Activated T-helper 2 cell treated with anti-CD3 and anti-CD28 coated beads, Interferon-gamma antibody, Interleukin-2, Interleukin-4, amounts not matched to agents 10 μg/mL and 5 μg/mL and 100 μg/mL, durations not matched to agents 14 hours and 24 hours and 36 hours (primary cell): ENCODE measurements at regions of chr2 and their contacts with region 1.

Region 1: GRCh38 chr2:219433666-219434467 is 776 bp upstream of the SPEG start:
- DNase-seq: no peak
- H3K4me3 Mint-ChIP-seq: no peak overlapping the region
- H3K27ac Mint-ChIP-seq: no peak overlapping the region
- H3K4me1 Mint-ChIP-seq: no peaks in the 10 kb centered on the region
- H3K27me3 Mint-ChIP-seq: peaks cover 29% of the 10 kb centered on the region

Region 2: DNA sequence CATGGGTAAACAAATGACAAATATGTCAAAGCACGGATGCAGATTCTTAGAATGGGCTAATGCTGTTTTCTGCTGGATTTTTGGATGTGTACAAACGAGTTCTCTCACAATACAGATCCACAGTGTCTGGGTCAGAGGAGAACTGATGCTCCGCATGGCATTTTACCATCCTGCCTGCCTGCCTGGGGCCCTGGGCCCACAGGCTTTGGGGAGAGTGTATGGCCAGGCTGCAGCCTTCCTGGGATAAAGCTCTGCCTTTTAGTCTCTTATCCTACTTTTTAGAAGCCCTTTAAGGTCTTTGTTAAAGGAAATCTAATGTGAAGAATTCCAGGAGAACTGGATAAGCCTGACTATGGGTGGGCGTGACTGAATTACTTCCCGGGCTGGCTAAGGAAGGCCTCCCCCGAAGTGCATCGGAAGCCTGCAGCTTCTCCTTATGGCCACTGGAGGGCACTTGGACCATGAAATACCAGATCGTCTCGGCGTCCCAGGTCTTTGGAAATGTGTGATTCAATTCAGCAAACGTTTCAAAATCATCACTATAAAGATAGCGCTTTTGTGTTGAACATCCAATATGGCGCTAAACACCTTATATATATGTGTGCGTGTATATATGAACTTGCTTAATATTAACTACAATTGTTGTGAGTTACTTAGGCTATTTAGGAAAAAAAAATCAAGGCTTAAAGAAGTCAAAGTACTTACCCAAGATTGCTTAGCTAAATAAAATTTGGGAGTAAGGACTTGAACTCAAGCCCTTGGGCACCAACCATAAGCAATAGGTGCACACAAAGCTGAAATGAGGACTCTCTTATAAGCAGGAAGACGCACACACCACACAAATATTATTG is 31.0 kb before region 1 on chr2:
- intact Hi-C with region 1: loop called (anchors 2 kb)
- DNase-seq: peak; percentile 34
- H3K4me3 Mint-ChIP-seq: no peak overlapping the region
- H3K27ac Mint-ChIP-seq: no peak overlapping the region
- H3K4me1 Mint-ChIP-seq: no peaks in the 10 kb centered on the region
- H3K27me3 Mint-ChIP-seq: peaks cover 10% of the 10 kb centered on the region

Region 3: GRCh38 chr2:219541611-219542180 is 107.8 kb after region 1 on chr2:
- intact Hi-C with region 1: no loop called
- DNase-seq: peak; percentile 84
- H3K4me3 Mint-ChIP-seq: peak overlapping the region; percentile 91
- H3K27ac Mint-ChIP-seq: no peak overlapping the region
- H3K4me1 Mint-ChIP-seq: peaks cover 11% of the 10 kb centered on the region
- H3K27me3 Mint-ChIP-seq: peaks cover 16% of the 10 kb centered on the region